Sciatic nerve (tissue), 2 donors: ENCODE measurements at regions of chr2 and their contacts with region 1.

Region 1: DNA sequence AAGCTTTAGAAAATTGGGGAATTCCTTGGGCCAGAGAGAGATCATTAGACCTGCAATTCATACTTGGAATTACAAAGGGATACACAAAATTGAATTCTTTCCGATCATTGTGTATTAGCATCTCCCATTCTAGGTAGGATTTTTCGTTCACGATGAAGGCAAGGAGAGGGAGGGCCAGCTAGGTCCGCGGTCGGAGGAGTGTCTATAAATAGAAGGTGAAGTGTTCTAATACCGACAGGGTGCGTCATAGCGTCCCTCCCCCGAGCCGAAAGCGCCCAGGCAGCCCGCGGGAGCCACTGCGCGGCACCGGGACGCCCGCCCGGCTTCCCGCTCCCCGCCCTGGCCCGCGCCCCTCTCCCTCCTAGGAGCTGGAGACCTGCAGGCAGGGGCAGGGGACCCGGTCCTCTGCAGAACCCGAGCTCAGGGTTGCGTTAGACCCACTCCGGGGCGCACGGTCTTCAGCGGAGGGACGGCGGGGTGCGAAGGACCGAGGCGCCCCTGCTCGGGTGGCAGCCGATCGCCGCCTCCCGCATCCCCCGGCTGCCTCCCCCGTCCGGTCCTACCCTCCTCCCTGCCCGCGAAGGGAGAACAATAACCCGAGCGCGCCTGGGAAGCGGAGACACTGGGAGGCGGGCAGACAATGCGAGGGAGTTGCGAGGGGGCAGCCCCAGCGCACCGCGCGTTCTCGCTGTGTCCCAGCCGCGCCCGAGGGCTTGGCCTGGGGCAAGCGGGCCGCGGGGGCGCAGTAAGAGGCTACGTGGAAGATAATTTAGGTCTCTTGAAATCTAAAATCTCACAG is 114.2 kb upstream of the SERTAD2 start:
- DNase-seq: peak; percentile 91
- ATAC-seq: peak; percentile 97

Region 2: DNA sequence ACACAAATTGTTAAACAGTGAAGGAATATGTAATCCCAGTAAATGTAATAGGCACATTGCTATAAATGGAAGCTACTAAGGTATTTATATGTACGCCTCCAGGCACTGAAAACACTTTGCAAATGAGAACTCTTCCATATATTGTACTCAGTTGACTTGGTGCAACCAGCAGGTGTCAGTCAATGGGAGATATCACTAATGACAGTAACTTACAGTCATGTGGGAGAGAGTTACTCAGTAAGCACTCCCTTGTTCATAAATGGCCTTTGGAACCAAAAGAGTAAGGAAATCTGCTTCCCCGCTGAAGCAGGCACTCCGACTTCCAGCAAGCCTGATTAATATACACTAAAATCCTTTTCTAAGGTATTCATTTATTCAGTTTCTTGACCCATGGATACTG is 1173.2 kb before region 1 on chr2:
- intact Hi-C with region 1: no loop called
- DNase-seq: no peak
- ATAC-seq: no peak

Region 3: DNA sequence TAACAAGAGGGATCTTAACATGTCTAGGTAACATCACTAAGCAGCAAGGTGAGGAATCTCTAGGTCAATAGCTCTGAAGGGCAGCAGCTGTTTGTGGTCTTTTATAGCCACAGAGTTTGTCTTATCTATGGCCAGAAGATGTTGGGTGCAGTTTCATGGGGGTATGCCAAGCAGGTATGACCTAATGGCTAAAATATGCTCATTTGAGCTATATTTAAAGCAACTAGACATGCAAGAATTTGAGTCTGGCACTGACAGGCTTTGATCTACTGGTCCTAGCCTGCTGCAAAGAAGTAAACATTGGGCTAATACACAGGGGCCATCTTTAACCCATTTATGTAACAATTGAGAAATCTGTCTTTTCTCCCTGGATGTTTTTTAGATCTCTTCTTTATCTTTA is 940.1 kb before region 1 on chr2:
- intact Hi-C with region 1: no loop called
- DNase-seq: no peak
- ATAC-seq: peak; percentile 49

Region 4: DNA sequence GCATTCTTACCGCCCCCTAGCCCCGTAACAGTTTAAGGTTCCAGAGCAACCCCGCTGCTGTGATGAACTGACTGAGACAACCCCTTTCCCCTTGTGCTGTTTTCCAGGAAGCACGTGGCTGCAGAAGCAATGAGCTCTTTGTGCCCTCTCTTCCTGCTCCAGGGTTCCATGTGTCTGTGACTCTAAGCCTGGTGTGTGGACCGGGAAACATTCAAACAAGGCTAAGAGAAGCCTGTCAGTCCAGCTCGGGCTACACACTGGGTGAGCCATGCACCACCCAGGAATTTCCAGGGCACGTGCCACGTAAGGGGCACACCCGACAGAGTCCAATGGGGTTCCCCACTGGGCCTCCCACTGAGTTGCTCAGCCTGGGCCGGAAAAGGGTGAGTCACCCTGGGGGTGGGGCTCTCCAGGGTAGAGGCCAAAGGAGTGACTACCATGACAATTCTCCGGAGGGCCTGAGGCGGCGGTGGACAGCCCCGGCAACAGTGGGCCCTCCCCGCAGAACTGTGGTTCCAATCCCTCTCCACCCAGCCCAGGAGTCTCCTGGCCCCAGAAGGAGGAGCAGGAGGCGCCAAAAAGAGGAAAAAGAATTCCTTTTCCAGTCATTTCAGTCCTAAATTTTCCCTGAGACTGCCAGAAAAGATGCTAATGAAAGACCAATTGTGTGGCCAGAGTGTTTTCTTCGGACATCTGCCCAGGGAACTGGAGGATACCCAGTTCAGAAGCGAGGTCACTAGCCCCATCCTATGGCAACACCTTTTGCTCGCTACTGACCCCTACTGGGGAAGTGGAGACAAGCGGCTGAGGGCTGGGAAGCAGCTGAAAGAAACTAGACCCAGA is 63.5 kb after region 1 on chr2:
- intact Hi-C with region 1: loop called (anchors 10 kb)
- DNase-seq: peak; percentile 88
- ATAC-seq: peak; percentile 95